Activated CD8-positive, alpha-beta T cell treated with anti-CD3 and anti-CD28 coated beads for 36 hours (primary cell): ENCODE measurements at regions of chr13 and their contacts with region 1.

Region 1: DNA sequence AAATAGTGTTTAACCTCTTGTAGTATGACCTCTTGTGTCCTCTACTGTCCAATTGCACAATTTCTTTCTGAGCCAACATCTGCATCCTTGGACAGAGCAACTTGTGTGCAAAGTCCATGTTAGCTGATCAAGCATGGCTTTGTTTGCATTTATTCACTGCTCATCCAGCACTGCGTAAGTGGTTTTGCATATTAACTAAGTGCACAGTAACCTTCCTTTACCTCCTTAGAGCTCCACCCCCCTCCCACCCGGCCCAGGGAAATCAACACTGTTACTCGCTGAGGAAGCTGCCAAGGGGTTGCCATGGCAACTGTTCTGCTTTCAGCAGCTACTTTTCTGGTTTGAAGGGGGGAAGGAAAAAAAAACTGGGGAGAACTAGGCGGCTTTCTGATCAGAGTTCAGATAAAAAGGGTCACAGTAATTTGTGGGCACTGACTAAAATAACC is 153.5 kb upstream of the KLF12 start:
- DNase-seq: peak; percentile 91
- ATAC-seq: peak; percentile 57
- H3K4me3 Mint-ChIP-seq: peak overlapping the region; percentile 67
- H3K27ac Mint-ChIP-seq: peak overlapping the region; percentile 73
- H3K4me1 Mint-ChIP-seq: peaks cover 66% of the 10 kb centered on the region
- H3K27me3 Mint-ChIP-seq: no peaks in the 10 kb centered on the region
- CTCF ChIP-seq: no peak

Region 2: DNA sequence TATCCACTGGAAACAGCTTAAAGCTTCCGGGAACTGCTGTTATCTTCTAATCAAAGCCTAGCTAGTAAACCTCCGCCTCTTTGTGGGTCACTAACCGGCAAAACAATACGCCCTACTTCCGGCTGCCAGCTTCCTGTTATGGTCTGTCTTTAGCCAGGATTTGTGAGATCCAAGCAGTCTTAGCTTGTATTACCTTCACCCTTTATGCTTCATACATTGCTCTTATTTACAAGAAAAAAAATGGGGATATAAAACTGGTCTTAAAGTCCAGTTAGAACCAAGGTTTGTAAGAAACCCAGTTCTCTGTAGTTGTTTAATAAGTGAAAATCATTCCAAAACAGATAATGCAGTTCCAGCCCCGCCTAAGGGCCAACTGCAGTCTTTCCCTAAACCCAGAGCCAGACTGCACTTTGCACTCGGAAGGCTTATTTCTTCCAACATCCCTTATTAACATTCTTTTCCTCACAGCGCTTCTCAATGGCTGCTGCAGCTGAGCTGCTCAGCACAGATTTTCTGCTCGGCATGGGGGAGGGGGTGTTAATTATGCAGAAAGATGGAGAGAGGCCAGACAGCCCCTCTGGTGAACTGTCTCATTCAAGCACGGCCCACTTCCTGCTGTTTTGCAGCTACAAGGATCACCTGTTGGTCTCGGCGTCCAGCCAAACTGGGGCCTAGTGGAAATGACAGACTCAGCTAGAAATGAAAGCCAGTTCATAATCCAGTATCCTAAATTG is 521.9 kb before region 1 on chr13:
- CTCF ChIA-PET with region 1: interaction called, 10 read pairs
- POLR2A ChIA-PET with region 1: no interaction called
- intact Hi-C with region 1: no loop called
- DNase-seq: peak; percentile 93
- ATAC-seq: peak; percentile 95
- H3K4me3 Mint-ChIP-seq: peak overlapping the region; percentile 67
- H3K27ac Mint-ChIP-seq: peak overlapping the region; percentile 97
- H3K4me1 Mint-ChIP-seq: peaks cover 71% of the 10 kb centered on the region
- H3K27me3 Mint-ChIP-seq: no peaks in the 10 kb centered on the region
- CTCF ChIP-seq: no peak

Region 3: GRCh38 chr13:73943137-73943964 is 344.4 kb before region 1 on chr13:
- CTCF ChIA-PET with region 1: interaction called, 11 read pairs
- POLR2A ChIA-PET with region 1: no interaction called
- intact Hi-C with region 1: loop called (anchors 10 kb)
- DNase-seq: no peak
- ATAC-seq: peak; percentile 92
- H3K4me3 Mint-ChIP-seq: peak overlapping the region; percentile 59
- H3K27ac Mint-ChIP-seq: peak overlapping the region; percentile 89
- H3K4me1 Mint-ChIP-seq: peaks cover 80% of the 10 kb centered on the region
- H3K27me3 Mint-ChIP-seq: no peaks in the 10 kb centered on the region
- CTCF ChIP-seq: no peak

Region 4: GRCh38 chr13:74246487-74246886 is 41.3 kb before region 1 on chr13:
- CTCF ChIA-PET with region 1: interaction called, 25 read pairs
- POLR2A ChIA-PET with region 1: interaction called, 4 read pairs
- intact Hi-C with region 1: loop called (anchors 5 kb)
- DNase-seq: peak; percentile 78
- ATAC-seq: peak; percentile 50
- H3K4me3 Mint-ChIP-seq: peak overlapping the region; percentile 70
- H3K27ac Mint-ChIP-seq: peak overlapping the region; percentile 90
- H3K4me1 Mint-ChIP-seq: peaks cover 88% of the 10 kb centered on the region
- H3K27me3 Mint-ChIP-seq: no peaks in the 10 kb centered on the region
- CTCF ChIP-seq: no peak

Region 5: DNA sequence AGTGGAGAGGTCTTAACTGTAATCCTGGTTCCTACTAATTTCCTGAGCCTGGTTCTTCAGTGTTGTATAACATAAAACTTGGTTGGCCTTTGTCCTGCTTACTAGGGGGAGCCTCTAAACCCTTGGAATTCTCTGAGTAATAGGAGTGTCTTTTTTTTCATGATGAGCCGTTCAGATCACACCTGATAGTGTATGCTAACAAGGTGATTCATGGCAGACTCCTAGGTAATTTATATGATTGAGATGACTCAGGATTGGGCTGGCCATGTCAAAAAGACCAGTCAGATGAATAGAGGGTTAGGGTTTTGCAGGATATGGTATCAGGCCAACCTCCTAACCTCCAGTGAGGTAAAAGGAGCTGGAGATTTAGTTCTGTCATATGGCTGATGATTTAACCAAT is 17.7 kb before region 1 on chr13:
- CTCF ChIA-PET with region 1: interaction called, 33 read pairs
- POLR2A ChIA-PET with region 1: no interaction called
- intact Hi-C with region 1: no loop called
- DNase-seq: no peak
- ATAC-seq: peak; percentile 51
- H3K4me3 Mint-ChIP-seq: no peak overlapping the region
- H3K27ac Mint-ChIP-seq: no peak overlapping the region
- H3K4me1 Mint-ChIP-seq: peaks cover 17% of the 10 kb centered on the region
- H3K27me3 Mint-ChIP-seq: no peaks in the 10 kb centered on the region
- CTCF ChIP-seq: no peak